GM23248 (cell line): ENCODE measurements at regions of chr12 and their contacts with region 1.

Region 1: DNA sequence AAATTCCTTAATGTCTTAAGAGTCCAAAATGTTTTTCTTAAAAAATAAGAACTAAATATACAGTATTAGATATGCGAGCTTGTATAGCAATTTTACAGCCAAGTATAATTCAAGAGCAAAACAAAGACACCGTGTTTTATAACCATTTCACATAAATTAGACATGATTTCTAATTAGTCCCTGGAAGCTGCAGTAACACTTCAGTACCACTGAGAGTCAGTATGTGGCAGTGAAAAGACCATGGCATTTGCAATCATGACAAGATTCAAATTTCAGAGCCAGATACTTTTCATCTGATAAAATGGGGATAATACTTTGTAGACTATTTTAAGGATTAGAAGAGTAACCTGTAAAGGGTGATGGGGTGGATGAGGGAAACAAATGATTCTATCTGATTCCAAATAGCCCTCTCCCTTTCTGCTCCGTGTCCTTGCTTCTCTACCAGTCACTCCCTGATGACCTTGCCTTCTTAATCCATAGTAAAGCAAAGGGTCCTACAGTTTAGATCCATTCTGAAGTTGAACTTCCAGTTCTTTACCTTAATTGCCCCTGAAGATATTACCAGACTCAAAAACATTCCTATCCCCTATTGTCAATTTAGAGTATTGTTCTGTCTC is 145.4 kb upstream of the ABCD2 start:
- DNase-seq: peak; percentile 78
- H3K4me3 ChIP-seq: no peak overlapping the region
- H3K27ac ChIP-seq: no peak overlapping the region
- H3K4me1 ChIP-seq: no peaks in the 10 kb centered on the region
- H3K27me3 ChIP-seq: no peaks in the 10 kb centered on the region

Region 2: DNA sequence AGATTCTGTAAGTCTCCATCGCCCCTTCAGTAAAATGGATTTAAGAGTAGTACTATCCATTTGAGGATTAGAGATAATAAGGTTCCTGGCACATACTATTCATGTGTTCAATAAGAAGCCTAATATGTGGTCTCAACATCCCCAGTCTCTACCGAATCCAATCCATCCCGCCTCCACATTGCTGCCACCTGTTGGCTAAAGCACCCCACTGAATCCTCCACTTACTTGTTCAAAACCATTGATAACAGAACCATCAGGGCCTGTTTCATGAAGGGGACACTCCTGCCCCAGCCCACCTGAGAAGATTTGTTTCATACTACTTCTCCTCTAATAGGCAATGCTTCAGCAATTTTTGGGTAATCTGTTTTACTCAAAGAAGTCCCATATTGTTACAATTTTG is 193.3 kb after region 1 on chr12:
- in situ Hi-C with region 1: loop called (anchors 10 kb)
- DNase-seq: no peak
- H3K4me3 ChIP-seq: no peak overlapping the region
- H3K27ac ChIP-seq: no peak overlapping the region
- H3K4me1 ChIP-seq: no peaks in the 10 kb centered on the region
- H3K27me3 ChIP-seq: no peaks in the 10 kb centered on the region

Region 3: DNA sequence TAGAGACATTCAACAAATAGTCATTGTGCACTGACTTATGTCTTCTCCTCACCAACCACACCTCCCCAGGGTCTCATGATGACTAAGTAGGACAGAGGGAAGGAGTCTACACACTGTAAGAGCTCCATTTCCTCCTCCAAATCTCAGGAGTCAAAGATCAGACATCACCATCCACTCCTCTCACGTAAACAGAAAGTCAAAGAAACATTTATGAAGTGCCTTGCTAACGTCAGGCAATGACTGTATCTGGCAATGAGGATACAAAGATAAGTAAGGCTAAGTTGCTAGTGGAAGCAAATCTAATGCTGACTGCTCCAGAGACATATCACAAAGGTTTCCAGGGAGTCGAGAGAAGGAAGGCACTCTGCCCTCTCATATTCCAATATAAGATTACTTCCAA is 251.9 kb after region 1 on chr12:
- in situ Hi-C with region 1: no loop called
- DNase-seq: peak; percentile 38
- H3K4me3 ChIP-seq: no peak overlapping the region
- H3K27ac ChIP-seq: no peak overlapping the region
- H3K4me1 ChIP-seq: no peaks in the 10 kb centered on the region
- H3K27me3 ChIP-seq: no peaks in the 10 kb centered on the region

Region 4: DNA sequence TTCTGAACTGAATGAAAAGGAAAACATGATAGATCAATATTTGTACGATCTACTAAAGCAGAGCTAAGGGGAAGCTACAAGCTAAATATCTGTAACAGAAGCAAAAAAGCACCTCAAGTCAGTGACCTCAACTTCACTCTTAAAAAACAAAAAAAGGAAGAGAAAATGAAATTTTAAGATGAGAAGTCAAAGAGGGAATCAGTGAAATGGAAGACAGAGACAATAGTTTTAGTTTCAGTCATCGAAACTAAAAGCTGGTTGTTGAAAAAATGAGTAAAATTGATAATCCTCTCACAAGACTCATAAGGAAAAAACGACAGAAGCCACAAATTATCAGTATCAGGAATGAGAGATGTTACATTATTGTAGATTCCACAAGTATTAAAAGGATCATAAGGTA is 352.8 kb after region 1 on chr12:
- in situ Hi-C with region 1: loop called (anchors 10 kb)
- DNase-seq: no peak
- H3K4me3 ChIP-seq: no peak overlapping the region
- H3K27ac ChIP-seq: no peak overlapping the region
- H3K4me1 ChIP-seq: no peaks in the 10 kb centered on the region
- H3K27me3 ChIP-seq: no peaks in the 10 kb centered on the region